ENCODE measurements at regions of chr3 and their contacts with region 1.

Region 1: GRCh38 chr3:51391075-51391567 is at the start of gene RBM15B:
- DNase-seq: peak; percentile 96 to 98 (median 98)
- H3K4me3 ChIP-seq: peak within 1 kb of the TSS; percentile 62 to 82 (median 76)
- H3K27ac ChIP-seq: peak within 1 kb of the TSS; percentile 56 to 78
- H3K4me1 ChIP-seq: peaks cover 7 to 79% (median 64%) of the 10 kb centered on the region in 4 experiments
- H3K27me3 ChIP-seq: no peaks in the 10 kb centered on the region

Region 2: DNA sequence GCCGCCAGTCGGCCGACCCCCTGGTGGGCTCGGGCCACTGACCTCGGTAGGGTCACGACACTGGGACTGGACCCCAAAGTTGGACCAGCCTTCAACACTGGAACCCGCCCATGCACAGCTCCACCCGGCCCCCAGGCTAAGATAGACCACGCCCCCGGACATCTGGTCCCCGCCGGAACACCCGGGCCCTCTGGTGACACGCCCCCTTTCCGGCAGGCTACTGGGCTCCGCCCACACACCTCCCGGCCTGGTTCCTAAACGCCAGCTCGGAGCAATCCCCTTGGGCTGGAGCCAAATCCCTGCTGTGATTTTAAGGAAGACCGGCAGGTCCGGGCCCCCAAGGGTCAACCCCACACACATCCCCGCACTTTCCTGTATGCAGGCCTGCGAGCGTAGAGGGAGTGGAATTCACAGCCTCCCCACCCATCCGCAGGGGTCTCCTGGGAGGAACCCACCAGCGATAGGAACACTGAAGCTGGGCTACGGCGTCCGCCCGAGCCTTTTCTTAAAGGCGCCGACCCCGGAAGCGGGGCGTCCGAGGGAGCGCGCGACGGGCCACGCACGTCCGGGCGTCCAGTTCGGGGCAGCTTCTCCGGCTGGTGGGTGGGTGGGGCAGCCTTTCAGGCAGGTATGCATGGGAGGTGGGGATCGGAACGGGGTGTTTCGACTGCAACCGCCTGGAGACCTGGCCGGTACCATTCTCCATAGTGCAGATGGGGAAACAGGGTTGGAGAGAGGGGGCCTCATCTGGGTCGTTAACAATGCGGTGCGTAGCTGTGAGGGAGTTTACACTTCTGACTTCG is 822.0 kb before region 1 on chr3 and contains the start of gene HEMK1:
- CTCF ChIA-PET with region 1: interaction called, 10 read pairs
- POLR2A ChIA-PET with region 1: no interaction called
- DNase-seq: peak; percentile 92 to 93 (median 93)
- H3K4me3 ChIP-seq: peak within 1 kb of the TSS; percentile 69 to 98 (median 91)
- H3K27ac ChIP-seq: peak within 1 kb of the TSS; percentile 40 to 80
- H3K4me1 ChIP-seq: peaks cover 7 to 57% (median 47%) of the 10 kb centered on the region in 4 experiments
- H3K27me3 ChIP-seq: peaks cover 0 to 4% (median 0%) of the 10 kb centered on the region in 5 experiments

Region 3: DNA sequence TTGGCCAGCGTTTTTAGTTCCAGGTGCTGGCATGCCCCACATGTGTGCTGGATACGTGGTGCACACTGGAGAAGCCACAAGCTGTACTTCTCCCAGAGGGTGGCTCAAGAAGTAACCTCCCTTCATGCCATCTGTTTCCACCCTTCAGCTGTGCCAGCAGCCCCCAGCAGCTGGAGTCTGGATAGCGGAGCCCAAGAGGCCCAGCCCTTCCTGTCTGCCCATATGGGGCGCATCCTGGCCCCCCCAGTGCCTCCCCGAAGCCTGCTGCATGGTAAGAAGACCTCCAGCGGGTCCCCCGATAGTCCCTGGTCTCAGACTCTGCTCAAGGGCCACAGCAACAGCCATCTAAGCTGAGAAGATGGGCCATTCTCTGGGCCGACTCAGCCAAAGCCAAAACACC is 11.8 kb before region 1 on chr3:
- CTCF ChIA-PET with region 1: interaction called, 56 read pairs
- POLR2A ChIA-PET with region 1: interaction called, 16 read pairs
- DNase-seq: peak; percentile 71 to 99 (median 97)
- H3K4me3 ChIP-seq: peak overlapping the region in 4 of 7 experiments; percentile 14 to 55 (median 34)
- H3K27ac ChIP-seq: peak overlapping the region in 1 of 2 experiments; percentile 60
- H3K4me1 ChIP-seq: peaks cover 15 to 76% (median 70%) of the 10 kb centered on the region in 4 experiments
- H3K27me3 ChIP-seq: no peaks in the 10 kb centered on the region

Region 4: DNA sequence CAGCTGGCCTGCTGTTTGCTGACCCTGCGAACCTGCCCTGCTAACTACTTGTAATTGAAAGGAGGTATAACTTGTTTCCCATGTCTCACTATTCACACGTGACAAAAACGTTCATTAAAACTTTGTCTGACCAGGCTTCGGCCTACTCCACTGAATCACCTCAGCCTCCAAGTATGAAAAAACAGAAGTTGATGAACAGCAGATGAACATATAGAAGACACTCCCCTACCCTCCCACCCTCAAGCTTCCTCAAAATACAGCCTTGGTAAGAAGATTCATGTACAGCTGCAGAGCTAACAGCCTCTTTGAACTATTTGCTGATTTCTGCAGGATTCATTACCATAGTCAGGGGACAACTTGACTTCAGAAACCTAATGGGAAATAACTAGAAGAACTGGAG is 10.6 kb after region 1 on chr3:
- CTCF ChIA-PET with region 1: interaction called, 20 read pairs
- POLR2A ChIA-PET with region 1: no interaction called
- DNase-seq: peak in 2 of 3 donors; percentile 60 to 69
- H3K4me3 ChIP-seq: no peak overlapping the region
- H3K27ac ChIP-seq: no peak overlapping the region
- H3K4me1 ChIP-seq: peaks cover 0 to 17% (median 0%) of the 10 kb centered on the region in 4 experiments
- H3K27me3 ChIP-seq: no peaks in the 10 kb centered on the region

Region 5: GRCh38 chr3:51408021-51408420 is 16.9 kb after region 1 on chr3:
- CTCF ChIA-PET with region 1: interaction called, 10 read pairs
- POLR2A ChIA-PET with region 1: no interaction called
- DNase-seq: no peak
- H3K4me3 ChIP-seq: no peak overlapping the region
- H3K27ac ChIP-seq: no peak overlapping the region
- H3K4me1 ChIP-seq: no peaks in the 10 kb centered on the region
- H3K27me3 ChIP-seq: no peaks in the 10 kb centered on the region